ENCODE measurements at regions of chr3 and their contacts with region 1.

Region 1: DNA sequence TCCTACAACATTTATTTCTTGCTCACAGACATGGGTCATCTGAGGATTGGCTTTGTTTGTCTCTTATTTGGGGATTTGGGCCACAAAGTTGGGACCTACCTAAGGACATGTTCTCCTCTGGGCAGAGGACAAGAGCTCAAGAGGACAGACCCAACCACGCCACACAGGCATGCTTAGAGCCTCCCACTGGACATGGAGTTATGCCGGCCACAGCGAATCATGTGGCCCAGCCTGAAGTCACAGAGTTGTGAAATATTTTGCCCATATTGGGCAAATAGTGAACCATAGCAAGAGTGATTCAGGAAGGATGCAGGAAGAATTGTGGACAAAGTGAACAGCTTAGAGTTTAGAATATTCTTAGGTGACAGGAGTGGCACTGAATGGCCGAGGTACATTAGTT is 9.9 kb downstream of the TRAK1 start:
- DNase-seq: no peak
- ATAC-seq: no peak
- H3K4me3 ChIP-seq: no peak overlapping the region
- H3K4me3 Mint-ChIP-seq: no peak overlapping the region
- H3K27ac ChIP-seq: no peak overlapping the region
- H3K27ac Mint-ChIP-seq: no peak overlapping the region
- H3K4me1 ChIP-seq: no peaks in the 10 kb centered on the region
- H3K4me1 Mint-ChIP-seq: peaks cover 11% of the 10 kb centered on the region
- H3K27me3 ChIP-seq: no peaks in the 10 kb centered on the region
- H3K27me3 Mint-ChIP-seq: no peaks in the 10 kb centered on the region
- CTCF ChIP-seq: no peak

Region 2: GRCh38 chr3:40580494-40581091 is 1520.5 kb before region 1 on chr3:
- CTCF ChIA-PET with region 1: interaction called, 47 read pairs
- POLR2A ChIA-PET with region 1: no interaction called
- intact Hi-C with region 1: loop called (anchors 1 to 2 kb)
- DNase-seq: peak; percentile 23 to 70 (median 62)
- ATAC-seq: peak; percentile 78
- H3K4me3 ChIP-seq: no peak overlapping the region
- H3K4me3 Mint-ChIP-seq: no peak overlapping the region
- H3K27ac ChIP-seq: no peak overlapping the region
- H3K27ac Mint-ChIP-seq: no peak overlapping the region
- H3K4me1 ChIP-seq: no peaks in the 10 kb centered on the region
- H3K4me1 Mint-ChIP-seq: no peaks in the 10 kb centered on the region
- H3K27me3 ChIP-seq: peaks cover 0 to 3% of the 10 kb centered on the region in 2 experiments
- H3K27me3 Mint-ChIP-seq: peaks cover 10% of the 10 kb centered on the region
- CTCF ChIP-seq: peak; percentile 83

Region 3: DNA sequence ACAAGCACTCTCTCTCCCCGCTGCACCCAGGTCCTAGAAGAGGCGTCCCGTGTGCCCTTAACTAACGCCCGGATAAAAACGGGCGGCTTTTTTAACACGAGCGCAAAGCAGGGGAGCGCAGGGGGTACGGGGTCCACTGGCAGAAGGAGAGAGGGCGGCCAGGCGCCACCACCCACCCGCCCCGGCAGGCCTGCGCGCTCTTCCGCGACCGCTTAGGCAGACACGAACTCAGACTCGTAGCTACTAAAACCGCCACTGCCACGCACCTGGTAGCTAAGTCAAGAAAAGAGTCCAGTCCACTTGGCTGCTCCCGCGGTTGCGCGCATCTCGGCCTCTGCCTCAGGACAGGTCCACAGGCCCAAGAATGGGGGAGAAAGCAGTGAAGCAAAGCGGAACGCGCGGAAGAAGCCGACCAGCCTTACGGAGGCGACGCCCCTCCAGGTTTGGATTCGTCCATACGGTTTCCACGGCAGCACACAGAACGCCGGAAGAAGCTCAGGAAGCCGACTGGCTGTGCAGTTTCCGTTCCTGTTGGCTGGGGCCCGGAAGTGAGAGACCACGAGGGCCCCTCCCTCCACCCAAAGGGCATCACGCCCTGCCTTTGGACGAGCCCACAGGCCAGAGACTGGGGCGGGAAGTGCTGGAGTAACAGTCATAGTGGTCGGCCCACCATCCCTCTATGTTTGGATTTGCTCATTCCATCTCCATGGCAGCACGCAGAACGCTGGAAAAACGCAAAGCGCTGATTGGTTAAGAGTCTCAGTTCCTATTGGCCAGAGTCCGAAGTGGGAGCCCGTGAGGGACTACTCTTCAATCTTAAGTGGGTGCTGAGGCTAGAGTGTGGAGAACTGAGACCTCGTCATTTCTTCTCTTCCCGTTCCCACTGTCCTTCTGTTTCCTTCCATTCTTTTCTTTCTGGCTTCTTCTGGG is 139.0 kb before region 1 on chr3 and contains the start of gene ULK4:
- CTCF ChIA-PET with region 1: interaction called, 5 read pairs
- POLR2A ChIA-PET with region 1: interaction called, 3 read pairs
- intact Hi-C with region 1: loop called in 1 of 2 experiments (anchors 1 kb)
- DNase-seq: peak; percentile 89 to 99 (median 95)
- ATAC-seq: peak; percentile 84
- H3K4me3 ChIP-seq: peak within 1 kb of the TSS; percentile 84 to 99
- H3K4me3 Mint-ChIP-seq: peak within 1 kb of the TSS; percentile 100
- H3K27ac ChIP-seq: peak within 1 kb of the TSS; percentile 85 to 96
- H3K27ac Mint-ChIP-seq: peak within 1 kb of the TSS; percentile 99
- H3K4me1 ChIP-seq: peaks cover 15% of the 10 kb centered on the region
- H3K4me1 Mint-ChIP-seq: peaks cover 24% of the 10 kb centered on the region
- H3K27me3 ChIP-seq: no peaks in the 10 kb centered on the region
- H3K27me3 Mint-ChIP-seq: no peaks in the 10 kb centered on the region
- CTCF ChIP-seq: no peak
- total RNA-seq, gene ULK4: 11.9 to 15.1 TPM

Region 4: GRCh38 chr3:42012935-42013690 is 87.9 kb before region 1 on chr3:
- CTCF ChIA-PET with region 1: interaction called, 11 read pairs
- POLR2A ChIA-PET with region 1: no interaction called
- intact Hi-C with region 1: loop called (anchors 2 to 5 kb)
- DNase-seq: peak; percentile 56 to 89 (median 71)
- ATAC-seq: peak; percentile 73
- H3K4me3 ChIP-seq: peak overlapping the region; percentile 85 to 89
- H3K4me3 Mint-ChIP-seq: peak overlapping the region; percentile 91
- H3K27ac ChIP-seq: peak overlapping the region; percentile 72 to 98
- H3K27ac Mint-ChIP-seq: peak overlapping the region; percentile 98
- H3K4me1 ChIP-seq: peaks cover 20% of the 10 kb centered on the region
- H3K4me1 Mint-ChIP-seq: peaks cover 35% of the 10 kb centered on the region
- H3K27me3 ChIP-seq: no peaks in the 10 kb centered on the region
- H3K27me3 Mint-ChIP-seq: no peaks in the 10 kb centered on the region
- CTCF ChIP-seq: no peak

Region 5: DNA sequence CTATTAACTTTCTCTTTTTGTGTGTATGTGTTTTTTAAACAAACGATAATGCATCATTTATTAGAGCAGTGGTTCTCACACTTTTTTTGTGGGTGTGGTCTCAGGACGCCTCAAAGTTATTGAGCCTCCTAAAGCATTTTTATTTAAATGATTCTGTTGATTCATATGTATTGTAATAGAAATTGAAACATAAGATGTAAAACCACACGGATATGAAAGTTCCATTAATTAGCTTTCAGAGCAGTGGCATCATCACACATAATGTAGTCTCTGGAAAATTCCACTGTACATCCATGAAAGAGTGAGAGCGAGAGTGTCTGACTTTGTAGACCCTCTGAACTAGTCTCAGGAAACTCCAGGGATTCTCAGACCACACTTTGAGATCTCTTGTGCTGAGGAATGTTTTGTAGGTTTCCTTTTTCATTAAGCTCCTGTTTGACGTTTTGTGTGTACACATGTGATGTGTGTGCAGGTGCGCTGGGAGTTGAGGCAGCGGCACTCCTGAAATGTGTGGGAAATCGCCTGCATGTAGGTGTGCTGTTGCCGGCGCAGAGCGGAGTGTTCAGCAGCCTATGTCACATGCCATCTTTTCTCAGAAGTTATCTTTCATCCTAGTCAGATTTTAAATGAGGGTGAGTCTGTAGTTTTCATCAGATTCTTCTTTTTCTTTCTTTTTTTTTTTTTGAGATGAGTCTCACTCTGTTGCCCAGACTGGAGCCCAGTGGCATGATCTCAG is 15.2 kb before region 1 on chr3:
- CTCF ChIA-PET with region 1: interaction called, 22 read pairs
- POLR2A ChIA-PET with region 1: interaction called, 3 read pairs
- intact Hi-C with region 1: no loop called
- DNase-seq: no peak
- ATAC-seq: no peak
- H3K4me3 ChIP-seq: no peak overlapping the region
- H3K4me3 Mint-ChIP-seq: no peak overlapping the region
- H3K27ac ChIP-seq: no peak overlapping the region
- H3K27ac Mint-ChIP-seq: no peak overlapping the region
- H3K4me1 ChIP-seq: peaks cover 10% of the 10 kb centered on the region
- H3K4me1 Mint-ChIP-seq: peaks cover 48% of the 10 kb centered on the region
- H3K27me3 ChIP-seq: no peaks in the 10 kb centered on the region
- H3K27me3 Mint-ChIP-seq: no peaks in the 10 kb centered on the region
- CTCF ChIP-seq: no peak

Measured in CD8-positive, alpha-beta T cell (primary cell).